Panc1 (cell line): ENCODE measurements at regions of chr18 and their contacts with region 1.

Region 1: GRCh38 chr18:3454365-3455089 is 4.6 kb downstream of the TGIF1 start:
- DNase-seq: no peak
- ATAC-seq: no peak
- H3K4me3 ChIP-seq: peak overlapping the region; percentile 97 to 98
- H3K27ac ChIP-seq: peak overlapping the region; percentile 100
- H3K4me1 ChIP-seq: peaks cover 49% of the 10 kb centered on the region
- H3K27me3 ChIP-seq: no peaks in the 10 kb centered on the region
- CTCF ChIP-seq: peak; percentile 69; the same call in 1 of the 2 replicates

Region 2: DNA sequence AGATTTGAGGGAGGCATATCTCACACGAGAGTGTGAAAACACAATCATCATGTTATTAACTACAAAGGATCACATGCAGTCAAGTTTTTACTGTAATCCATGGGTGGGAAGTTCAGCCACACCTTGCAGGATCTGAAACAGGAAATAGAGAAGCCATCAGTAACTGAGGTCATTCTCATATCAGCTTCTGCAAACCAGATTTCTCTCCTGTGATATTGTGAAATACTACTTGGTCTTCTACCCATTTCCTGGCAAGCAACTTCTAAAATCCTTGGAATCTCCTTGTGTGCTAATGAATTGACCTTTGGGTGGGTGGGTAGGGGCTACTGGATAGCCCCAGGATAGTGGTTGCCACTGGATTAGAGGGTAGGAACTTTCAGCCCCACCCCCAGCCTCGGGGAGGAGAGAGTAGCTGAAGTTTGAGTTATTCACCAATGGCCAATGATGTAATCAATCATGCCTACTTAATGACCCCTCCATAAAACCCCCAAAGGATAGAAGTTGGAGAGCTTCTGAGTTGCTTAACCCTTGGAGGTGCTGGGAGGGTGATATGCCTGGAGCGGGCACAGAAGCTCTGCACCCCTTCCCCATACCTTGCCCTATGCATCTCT is 30.1 kb before region 1 on chr18:
- CTCF ChIA-PET with region 1: no interaction called
- POLR2A ChIA-PET with region 1: interaction called, 15 read pairs
- in situ Hi-C with region 1: no loop called
- intact Hi-C with region 1: no loop called
- DNase-seq: no peak
- ATAC-seq: no peak
- H3K4me3 ChIP-seq: no peak overlapping the region
- H3K27ac ChIP-seq: no peak overlapping the region; the same call in 1 of the 2 replicates
- H3K4me1 ChIP-seq: no peaks in the 10 kb centered on the region
- H3K27me3 ChIP-seq: no peaks in the 10 kb centered on the region
- CTCF ChIP-seq: no peak

Region 3: GRCh38 chr18:3585656-3586509 is 131.4 kb after region 1 on chr18:
- CTCF ChIA-PET with region 1: interaction called, 12 read pairs
- POLR2A ChIA-PET with region 1: no interaction called
- in situ Hi-C with region 1: no loop called
- intact Hi-C with region 1: no loop called
- DNase-seq: peak; percentile 53
- ATAC-seq: peak; percentile 82
- H3K4me3 ChIP-seq: no peak overlapping the region
- H3K27ac ChIP-seq: peak overlapping the region; percentile 93
- H3K4me1 ChIP-seq: peaks cover 16% of the 10 kb centered on the region
- H3K27me3 ChIP-seq: no peaks in the 10 kb centered on the region
- CTCF ChIP-seq: peak; percentile 81

Region 4: DNA sequence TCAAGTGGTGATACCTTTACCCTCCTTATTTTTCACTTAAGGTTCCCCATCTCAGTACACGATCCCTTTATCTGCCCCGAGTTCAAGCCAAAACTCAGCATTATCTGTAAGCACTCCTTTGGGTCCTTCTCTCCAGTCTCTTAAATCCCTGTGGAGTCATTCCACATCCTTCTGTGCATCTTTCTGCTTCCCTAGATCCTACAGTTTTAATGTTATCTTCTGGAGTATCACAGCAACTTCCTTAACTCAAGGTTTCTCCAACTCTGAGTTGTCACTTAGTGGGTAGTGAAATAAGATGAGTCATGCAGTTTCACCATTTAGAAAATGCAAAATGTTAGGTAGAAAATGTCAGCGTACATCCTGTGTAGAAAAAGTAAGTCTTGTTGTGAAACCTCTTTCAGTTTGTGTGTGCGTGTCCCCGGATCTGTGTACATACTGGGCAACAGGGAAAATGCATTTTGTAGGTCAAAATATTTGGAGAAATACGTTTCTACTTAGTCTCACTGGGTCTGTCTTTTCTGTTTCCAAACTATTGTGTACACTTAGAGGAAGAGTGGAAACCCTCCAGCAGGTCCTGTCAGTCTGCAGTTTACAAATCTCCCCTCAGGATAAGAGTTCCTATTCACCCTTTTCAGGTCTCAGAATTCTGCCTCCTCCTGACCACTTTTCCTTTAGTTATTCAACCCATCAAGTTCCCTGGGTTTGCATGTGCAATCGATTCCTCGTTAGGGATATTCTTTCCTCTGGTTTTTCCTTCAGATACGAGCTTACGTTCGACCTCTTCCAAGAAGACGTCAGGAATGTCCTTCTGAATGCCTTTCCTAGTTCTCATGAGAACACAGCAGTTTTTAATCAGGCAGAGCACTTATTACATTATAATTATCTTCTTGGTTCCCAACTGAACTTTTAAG is 150.2 kb after region 1 on chr18:
- CTCF ChIA-PET with region 1: no interaction called
- POLR2A ChIA-PET with region 1: interaction called, 16 read pairs
- in situ Hi-C with region 1: no loop called
- intact Hi-C with region 1: no loop called
- DNase-seq: peak; percentile 81
- ATAC-seq: peak; percentile 2; the same call in 1 of the 2 replicates
- H3K4me3 ChIP-seq: peak overlapping the region; percentile 57 to 72
- H3K27ac ChIP-seq: peak overlapping the region; percentile 100
- H3K4me1 ChIP-seq: peaks cover 51% of the 10 kb centered on the region
- H3K27me3 ChIP-seq: no peaks in the 10 kb centered on the region
- CTCF ChIP-seq: no peak

Region 5: DNA sequence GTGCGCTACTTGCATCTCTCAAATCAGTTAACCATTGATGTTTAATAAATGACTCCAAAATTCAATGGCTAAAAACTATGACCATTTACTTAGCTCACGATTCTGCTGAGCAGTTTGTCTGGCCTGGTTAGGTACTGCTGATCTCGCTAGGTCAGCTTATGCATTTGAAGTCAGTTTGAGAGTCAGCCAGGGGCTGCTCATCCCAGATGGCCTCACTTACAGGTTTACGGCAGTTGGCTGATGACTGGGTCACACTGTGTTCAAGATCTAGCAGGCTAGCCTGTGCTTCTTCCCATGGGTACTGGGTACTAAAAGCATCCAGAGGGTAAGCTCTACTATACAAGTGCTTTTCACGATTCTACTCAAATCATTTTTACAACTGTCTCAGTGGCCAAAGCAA is 878.5 kb after region 1 on chr18:
- CTCF ChIA-PET with region 1: no interaction called
- POLR2A ChIA-PET with region 1: interaction called, 13 read pairs
- in situ Hi-C with region 1: no loop called
- intact Hi-C with region 1: no loop called
- DNase-seq: no peak
- ATAC-seq: no peak
- H3K4me3 ChIP-seq: no peak overlapping the region
- H3K27ac ChIP-seq: no peak overlapping the region
- H3K4me1 ChIP-seq: no peaks in the 10 kb centered on the region
- H3K27me3 ChIP-seq: no peaks in the 10 kb centered on the region
- CTCF ChIP-seq: no peak

Region 6: DNA sequence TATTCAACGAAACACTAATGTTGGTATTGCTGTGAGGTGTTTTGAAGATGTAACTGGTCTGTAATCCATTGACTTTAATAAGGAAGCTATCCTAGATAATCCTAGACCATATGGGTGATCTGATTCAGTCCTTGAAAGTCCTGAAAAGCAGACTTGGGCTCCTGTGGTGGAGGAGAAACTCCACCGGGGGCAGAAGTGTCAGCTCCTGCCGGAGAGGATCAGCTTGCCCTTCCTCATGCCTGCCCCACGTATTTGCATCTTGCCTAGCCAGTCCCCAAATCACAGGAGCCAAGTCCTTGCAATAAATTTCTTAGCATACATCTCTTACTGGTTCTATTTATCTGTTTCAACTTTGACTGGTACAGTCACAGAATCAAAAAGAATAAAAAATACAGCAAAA is 1144.8 kb after region 1 on chr18:
- CTCF ChIA-PET with region 1: no interaction called
- POLR2A ChIA-PET with region 1: no interaction called
- in situ Hi-C with region 1: no loop called
- intact Hi-C with region 1: no loop called
- DNase-seq: no peak
- ATAC-seq: no peak
- H3K4me3 ChIP-seq: no peak overlapping the region
- H3K27ac ChIP-seq: no peak overlapping the region
- H3K4me1 ChIP-seq: no peaks in the 10 kb centered on the region
- H3K27me3 ChIP-seq: no peaks in the 10 kb centered on the region
- CTCF ChIP-seq: no peak